ENCODE measurements at regions of chr19 and their contacts with region 1.

Region 1: DNA sequence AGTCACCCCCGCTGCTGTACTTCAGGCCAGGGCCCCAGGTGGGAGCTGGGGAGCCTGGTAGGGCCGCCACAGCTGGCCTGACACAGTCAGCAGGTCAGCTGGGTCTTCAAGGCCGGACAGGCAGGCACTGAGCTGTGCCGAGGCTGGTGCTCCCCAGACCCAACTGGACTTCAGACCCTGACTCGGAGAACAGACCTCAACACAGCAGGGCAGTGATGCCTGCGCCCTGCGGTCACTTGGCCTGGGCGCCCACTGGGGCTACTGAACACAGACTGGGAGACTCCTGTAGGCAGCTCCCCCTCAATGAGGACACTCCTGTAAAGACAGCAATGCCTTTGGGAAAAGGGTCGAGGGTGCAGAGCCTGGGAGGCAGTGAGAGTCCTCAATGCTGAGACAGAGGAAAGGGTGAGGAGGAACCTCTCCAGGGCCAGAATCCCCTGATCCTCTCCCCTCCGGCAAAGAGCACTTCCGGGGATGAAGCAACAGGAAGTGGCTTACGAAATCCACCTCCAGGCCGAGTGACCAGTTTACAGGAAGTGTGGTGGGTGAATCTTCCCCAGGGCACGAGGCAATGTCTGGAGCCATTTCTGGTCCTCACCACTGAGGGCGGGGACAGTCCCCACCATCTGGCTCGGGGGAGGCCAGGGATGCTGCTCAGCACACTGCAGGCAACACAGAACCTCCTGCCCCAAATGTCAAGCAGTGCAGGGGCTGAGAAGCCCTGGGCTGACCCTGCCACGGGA is 40.8 kb upstream of the ISYNA1 start:
- DNase-seq: peak; percentile 43 to 71
- ATAC-seq: peak; percentile 48 to 81 (median 62)
- H3K4me3 ChIP-seq: no peak overlapping the region
- H3K4me3 Mint-ChIP-seq: peak overlapping the region; percentile 82
- H3K27ac ChIP-seq: peak overlapping the region; percentile 77
- H3K27ac Mint-ChIP-seq: peak overlapping the region; percentile 93 to 99
- H3K4me1 ChIP-seq: peaks cover 87% of the 10 kb centered on the region
- H3K4me1 Mint-ChIP-seq: peaks cover 68 to 90% of the 10 kb centered on the region in 2 donors
- H3K27me3 ChIP-seq: no peaks in the 10 kb centered on the region
- H3K27me3 Mint-ChIP-seq: no peaks in the 10 kb centered on the region
- CTCF ChIP-seq: no peak

Region 2: DNA sequence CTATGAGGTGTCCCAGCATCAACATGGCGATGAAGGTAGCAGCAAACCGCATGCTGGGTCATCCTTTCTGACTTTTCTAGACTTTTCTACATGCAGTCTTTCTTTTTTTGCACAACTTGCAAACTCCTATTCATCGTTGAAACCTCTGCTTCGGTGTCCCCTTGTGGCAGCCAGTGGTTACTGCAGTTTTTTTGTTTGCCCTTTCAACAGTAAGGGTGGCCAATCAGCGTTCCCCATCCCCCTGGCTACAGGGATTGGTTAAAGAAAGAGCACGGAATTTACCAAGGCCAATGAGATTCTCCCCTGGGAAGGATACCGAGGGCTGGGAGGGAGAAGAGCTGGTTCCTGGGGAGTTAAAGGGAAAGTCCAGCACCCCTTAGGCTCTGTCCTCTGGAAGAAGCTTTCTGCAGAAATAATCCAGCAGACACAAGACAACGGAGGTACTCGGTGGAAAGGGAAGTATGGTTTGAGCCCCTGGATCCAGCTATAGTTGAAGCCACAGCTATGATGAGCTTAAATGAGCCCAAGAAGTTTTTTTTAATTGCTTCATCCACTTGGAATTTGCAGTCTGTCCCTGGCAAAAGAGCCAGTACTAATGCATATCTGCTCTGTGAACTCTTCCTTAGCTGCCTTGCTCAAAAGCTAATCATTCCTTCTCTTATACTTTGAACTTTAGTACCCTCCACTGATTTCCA is 150.3 kb before region 1 on chr19:
- intact Hi-C with region 1: no loop called
- DNase-seq: peak; percentile 78 to 94
- ATAC-seq: peak; percentile 98 to 99 (median 98)
- H3K4me3 ChIP-seq: no peak overlapping the region
- H3K4me3 Mint-ChIP-seq: peak overlapping the region; percentile 45
- H3K27ac ChIP-seq: no peak overlapping the region
- H3K27ac Mint-ChIP-seq: peak overlapping the region; percentile 38 to 52
- H3K4me1 ChIP-seq: peaks cover 20% of the 10 kb centered on the region
- H3K4me1 Mint-ChIP-seq: peaks cover 15% of the 10 kb centered on the region in 2 donors
- H3K27me3 ChIP-seq: no peaks in the 10 kb centered on the region
- H3K27me3 Mint-ChIP-seq: no peaks in the 10 kb centered on the region
- CTCF ChIP-seq: peak; percentile 90

Region 3: DNA sequence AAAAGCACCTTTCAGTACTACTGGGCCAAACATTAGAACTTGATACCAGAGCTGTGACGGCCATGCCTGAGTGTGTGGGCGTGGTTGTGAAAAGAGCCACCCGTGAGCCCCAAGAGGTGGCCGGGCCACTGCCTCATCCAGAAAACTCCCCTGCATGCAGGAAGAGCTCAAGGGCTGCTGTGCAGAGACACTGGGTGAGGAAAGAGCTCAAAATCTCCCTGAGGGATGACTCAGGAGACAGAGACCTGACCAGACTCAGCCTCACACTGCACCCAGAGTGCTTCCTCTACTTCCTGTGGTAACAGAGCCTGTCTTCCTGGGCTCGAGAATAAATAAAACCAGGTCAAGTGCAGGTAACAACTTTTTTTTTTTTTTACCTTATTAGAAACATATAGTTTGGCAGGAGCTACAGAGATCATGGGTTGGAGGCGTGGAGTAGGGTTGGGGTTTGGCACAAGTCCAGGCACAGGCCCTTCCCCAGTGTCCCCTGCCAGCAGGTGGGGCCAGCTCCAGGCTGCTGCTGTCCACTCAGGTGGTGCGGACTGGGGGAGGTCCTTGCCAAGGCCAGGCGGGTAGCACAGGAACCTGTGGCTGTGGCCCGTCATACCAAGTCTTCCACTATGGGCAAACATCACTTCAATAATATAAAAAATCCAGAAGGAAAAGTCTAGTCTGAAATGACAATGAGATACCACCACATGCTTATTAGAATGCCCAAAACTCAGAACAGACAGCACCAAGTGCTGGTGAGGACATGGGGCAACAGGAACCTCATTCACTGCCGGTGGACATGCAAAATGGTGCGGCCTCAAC is 17.6 kb after region 1 on chr19:
- intact Hi-C with region 1: loop called (anchors 2 kb)
- DNase-seq: peak; percentile 70 to 90
- ATAC-seq: peak; percentile 84 to 93 (median 88)
- H3K4me3 ChIP-seq: no peak overlapping the region
- H3K4me3 Mint-ChIP-seq: peak overlapping the region; percentile 80
- H3K27ac ChIP-seq: peak overlapping the region; percentile 93
- H3K27ac Mint-ChIP-seq: peak overlapping the region; percentile 92 to 93
- H3K4me1 ChIP-seq: peaks cover 99% of the 10 kb centered on the region
- H3K4me1 Mint-ChIP-seq: peaks cover 66 to 69% of the 10 kb centered on the region in 2 donors
- H3K27me3 ChIP-seq: no peaks in the 10 kb centered on the region
- H3K27me3 Mint-ChIP-seq: no peaks in the 10 kb centered on the region
- CTCF ChIP-seq: no peak